ENCODE measurements at regions of chr2 and their contacts with region 1.

Region 1: DNA sequence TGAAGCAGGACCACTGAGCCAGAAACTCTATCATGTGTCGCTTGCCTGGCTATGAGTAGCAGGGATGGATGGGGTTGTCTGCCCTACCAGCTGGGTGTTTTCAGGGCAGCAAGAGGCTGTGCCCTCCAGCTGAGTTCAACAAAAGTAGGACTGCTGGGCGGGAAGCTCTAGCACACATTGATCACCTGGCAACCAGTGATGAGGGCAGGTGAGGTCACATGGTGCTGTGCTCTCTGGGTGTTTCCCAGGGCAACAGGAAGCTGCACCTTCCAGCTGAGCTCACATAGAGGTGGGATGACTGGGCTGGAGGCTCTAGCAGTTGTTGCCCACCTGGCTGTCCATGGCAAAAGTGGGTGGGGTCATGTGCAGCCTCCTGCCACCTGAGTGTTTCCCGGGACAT is 487.3 kb upstream of the VWC2L start:
- DNase-seq: no peak
- H3K4me3 ChIP-seq: no peak overlapping the region
- H3K27ac ChIP-seq: no peak overlapping the region
- H3K4me1 ChIP-seq: no peaks in the 10 kb centered on the region
- H3K27me3 ChIP-seq: no peaks in the 10 kb centered on the region
- CTCF ChIP-seq: no peak
- POLR2A ChIP-seq: no peak

Region 2: GRCh38 chr2:213787869-213788268 is 135.7 kb before region 1 on chr2:
- intact Hi-C with region 1: no loop called
- DNase-seq: no peak
- H3K4me3 ChIP-seq: no peak overlapping the region
- H3K27ac ChIP-seq: no peak overlapping the region
- H3K4me1 ChIP-seq: no peaks in the 10 kb centered on the region
- H3K27me3 ChIP-seq: no peaks in the 10 kb centered on the region
- CTCF ChIP-seq: no peak
- POLR2A ChIP-seq: no peak

Region 3: DNA sequence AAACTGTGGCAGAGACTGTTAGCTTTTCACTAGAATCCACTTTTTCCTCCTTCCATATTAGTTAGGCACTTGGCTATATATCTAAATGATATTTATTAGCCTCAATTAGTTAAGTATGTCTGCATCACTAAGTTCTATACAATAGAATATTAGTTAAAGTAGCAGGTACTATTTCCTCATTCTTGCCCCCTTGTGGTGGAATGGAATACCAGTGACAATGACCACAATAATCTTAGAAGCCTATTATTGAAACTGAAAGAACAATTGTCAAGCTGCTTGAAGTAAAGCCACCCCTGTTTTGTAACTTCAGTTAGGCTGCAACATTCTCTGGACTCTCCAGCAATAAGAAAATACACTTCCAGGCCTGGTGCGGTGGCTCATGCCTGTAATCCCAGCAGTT is 11.0 kb after region 1 on chr2:
- intact Hi-C with region 1: loop called (anchors 1 kb)
- DNase-seq: no peak
- H3K4me3 ChIP-seq: no peak overlapping the region
- H3K27ac ChIP-seq: no peak overlapping the region
- H3K4me1 ChIP-seq: no peaks in the 10 kb centered on the region
- H3K27me3 ChIP-seq: no peaks in the 10 kb centered on the region
- CTCF ChIP-seq: no peak
- POLR2A ChIP-seq: no peak

Region 4: DNA sequence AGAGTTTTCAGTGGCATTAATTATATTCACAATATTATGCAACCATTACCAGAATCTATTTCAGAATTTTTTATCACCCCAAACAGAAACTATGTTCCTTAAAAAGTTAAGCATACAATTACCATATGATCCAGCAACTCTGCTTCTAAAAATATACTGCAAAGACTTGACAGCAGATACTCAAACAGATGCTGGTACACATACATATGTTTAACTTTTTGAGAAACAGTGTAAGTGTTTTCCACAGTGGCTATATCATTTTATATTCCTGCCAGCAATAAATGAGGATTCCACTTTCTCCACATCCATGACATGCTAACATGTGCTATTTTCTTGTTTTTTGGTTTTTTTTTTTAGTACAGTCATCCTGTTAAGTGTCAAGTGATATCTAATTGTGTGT is 48.0 kb after region 1 on chr2:
- intact Hi-C with region 1: no loop called
- DNase-seq: no peak
- H3K4me3 ChIP-seq: no peak overlapping the region
- H3K27ac ChIP-seq: no peak overlapping the region
- H3K4me1 ChIP-seq: no peaks in the 10 kb centered on the region
- H3K27me3 ChIP-seq: no peaks in the 10 kb centered on the region
- CTCF ChIP-seq: no peak
- POLR2A ChIP-seq: no peak

Region 5: GRCh38 chr2:214107726-214108125 is 184.2 kb after region 1 on chr2:
- intact Hi-C with region 1: loop called (anchors 5 kb)
- DNase-seq: no peak
- H3K4me3 ChIP-seq: no peak overlapping the region
- H3K27ac ChIP-seq: no peak overlapping the region
- H3K4me1 ChIP-seq: no peaks in the 10 kb centered on the region
- H3K27me3 ChIP-seq: no peaks in the 10 kb centered on the region
- CTCF ChIP-seq: no peak
- POLR2A ChIP-seq: no peak

Region 6: GRCh38 chr2:214156971-214157370 is 233.4 kb after region 1 on chr2:
- intact Hi-C with region 1: no loop called
- DNase-seq: no peak
- H3K4me3 ChIP-seq: no peak overlapping the region
- H3K27ac ChIP-seq: no peak overlapping the region
- H3K4me1 ChIP-seq: no peaks in the 10 kb centered on the region
- H3K27me3 ChIP-seq: no peaks in the 10 kb centered on the region
- CTCF ChIP-seq: no peak
- POLR2A ChIP-seq: no peak